PC-9 (cell line): ENCODE measurements at regions of chr10 and their contacts with region 1.

Region 1: DNA sequence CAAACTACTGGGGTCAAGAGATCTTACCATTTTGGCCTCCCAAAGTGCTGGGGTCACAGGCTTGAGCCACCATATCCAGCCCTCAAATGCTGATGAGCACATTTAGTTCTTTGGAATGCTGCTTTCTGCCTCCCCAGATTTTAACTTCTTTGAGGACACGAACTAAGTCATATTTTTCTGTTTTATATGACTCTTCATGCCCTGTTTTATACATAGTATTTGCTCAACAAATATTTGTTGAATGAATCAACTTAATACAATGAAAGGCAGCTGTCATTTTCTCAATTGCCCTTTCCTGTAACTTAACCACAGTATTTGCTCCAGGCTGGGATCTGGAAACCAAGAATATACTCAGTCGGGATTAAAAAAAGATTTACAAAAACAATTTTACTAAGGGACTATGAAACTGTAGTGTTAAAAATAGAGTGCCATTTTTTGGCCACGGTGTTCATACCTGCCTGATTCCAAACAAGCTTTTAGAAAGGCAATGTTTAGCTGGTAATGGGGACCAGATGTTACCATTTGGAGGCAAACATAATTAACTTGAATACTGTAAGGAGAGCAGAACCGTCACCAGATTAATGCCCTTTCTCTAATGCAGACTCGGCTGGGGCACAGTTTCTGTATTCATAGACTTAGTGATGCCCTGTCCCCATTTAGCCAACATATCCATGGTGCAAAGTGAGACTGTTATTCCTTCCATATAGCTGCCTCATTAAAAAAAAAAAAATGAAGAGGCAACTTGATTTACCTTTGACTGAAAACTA is 117.6 kb downstream of the NRP1 start:
- DNase-seq: peak; percentile 63 to 93
- H3K4me3 ChIP-seq: no peak overlapping the region; the same call in 1 of the 2 replicates
- H3K27ac ChIP-seq: peak overlapping the region; percentile 89
- H3K4me1 ChIP-seq: peaks cover 36% of the 10 kb centered on the region
- H3K27me3 ChIP-seq: no peaks in the 10 kb centered on the region
- CTCF ChIP-seq: no peak

Region 2: GRCh38 chr10:33237736-33238624 is 21.1 kb after region 1 on chr10:
- CTCF ChIA-PET with region 1: no interaction called
- POLR2A ChIA-PET with region 1: no interaction called
- intact Hi-C with region 1: loop called (anchors 1 kb)
- DNase-seq: peak; percentile 72 to 94
- H3K4me3 ChIP-seq: no peak overlapping the region
- H3K27ac ChIP-seq: peak overlapping the region; percentile 89
- H3K4me1 ChIP-seq: peaks cover 56% of the 10 kb centered on the region
- H3K27me3 ChIP-seq: no peaks in the 10 kb centered on the region
- CTCF ChIP-seq: no peak

Region 3: GRCh38 chr10:33265621-33266020 is 48.8 kb after region 1 on chr10:
- CTCF ChIA-PET with region 1: no interaction called
- POLR2A ChIA-PET with region 1: no interaction called
- intact Hi-C with region 1: loop called (anchors 2 kb)
- DNase-seq: no peak
- H3K4me3 ChIP-seq: no peak overlapping the region
- H3K27ac ChIP-seq: peak overlapping the region; percentile 90
- H3K4me1 ChIP-seq: peaks cover 40% of the 10 kb centered on the region
- H3K27me3 ChIP-seq: no peaks in the 10 kb centered on the region
- CTCF ChIP-seq: no peak

Region 4: GRCh38 chr10:33291053-33291592 is 74.3 kb after region 1 on chr10:
- CTCF ChIA-PET with region 1: no interaction called
- POLR2A ChIA-PET with region 1: no interaction called
- intact Hi-C with region 1: loop called (anchors 1 kb)
- DNase-seq: peak; percentile 37 to 91
- H3K4me3 ChIP-seq: peak overlapping the region; percentile 31; the same call in 1 of the 2 replicates
- H3K27ac ChIP-seq: peak overlapping the region; percentile 99
- H3K4me1 ChIP-seq: peaks cover 48% of the 10 kb centered on the region
- H3K27me3 ChIP-seq: no peaks in the 10 kb centered on the region
- CTCF ChIP-seq: no peak

Region 5: GRCh38 chr10:33557313-33557712 is 340.5 kb after region 1 on chr10:
- CTCF ChIA-PET with region 1: no interaction called
- POLR2A ChIA-PET with region 1: no interaction called
- intact Hi-C with region 1: no loop called
- DNase-seq: no peak
- H3K4me3 ChIP-seq: no peak overlapping the region
- H3K27ac ChIP-seq: no peak overlapping the region
- H3K4me1 ChIP-seq: peaks cover 8% of the 10 kb centered on the region; the same call in 1 of the 2 replicates
- H3K27me3 ChIP-seq: no peaks in the 10 kb centered on the region
- CTCF ChIP-seq: no peak